GM12878 (cell line): ENCODE measurements at regions of chr5 and their contacts with region 1.

Region 1: DNA sequence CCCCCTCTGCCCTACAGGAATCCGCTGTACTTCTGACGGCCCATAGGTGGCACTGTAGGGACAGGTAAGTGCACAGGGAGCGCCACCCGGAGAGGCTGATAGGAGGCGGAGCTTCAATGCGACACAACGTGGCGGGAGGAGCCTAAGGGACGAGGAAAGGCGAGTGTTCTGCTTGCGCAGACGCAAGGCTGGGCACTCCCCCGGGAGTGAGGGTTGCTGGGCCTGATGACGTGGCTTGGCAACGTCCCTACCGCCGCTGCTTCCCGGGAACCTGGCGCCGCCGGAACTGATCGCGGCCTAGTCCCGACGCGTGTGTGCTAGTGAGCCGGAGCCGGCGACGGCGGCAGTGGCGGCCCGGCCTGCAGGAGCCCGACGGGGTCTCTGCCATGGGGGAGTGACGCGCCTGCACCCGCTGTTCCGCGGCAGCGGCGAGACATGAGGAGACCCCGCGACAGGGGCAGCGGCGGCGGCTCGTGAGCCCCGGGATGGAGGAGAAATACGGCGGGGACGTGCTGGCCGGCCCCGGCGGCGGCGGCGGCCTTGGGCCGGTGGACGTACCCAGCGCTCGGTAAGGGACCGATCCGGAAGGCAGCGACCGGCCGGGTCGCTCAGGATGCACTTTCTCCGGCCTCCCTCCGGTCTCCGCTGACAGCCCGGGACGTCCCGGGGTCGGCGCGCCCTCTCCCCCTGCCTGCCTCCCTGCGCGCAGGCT is at the start of gene SLC30A5:
- DNase-seq: peak; percentile 98
- ATAC-seq: peak; percentile 99
- H3K4me3 ChIP-seq: peak within 1 kb of the TSS; percentile 87
- H3K27ac ChIP-seq: peak within 1 kb of the TSS; percentile 57
- H3K4me1 ChIP-seq: no peaks in the 10 kb centered on the region; the same call in 1 of the 2 replicates
- H3K27me3 ChIP-seq: no peaks in the 10 kb centered on the region
- CTCF ChIP-seq: peak; percentile 88 to 98 (median 97)
- EP300 ChIP-seq: peak in 1 of 2 experiments; percentile 51; a peak in 3 of 4 replicates
- POLR2A ChIP-seq: peak; percentile 98
- RAD21 ChIP-seq: peak; percentile 98
- polyA plus RNA-seq, gene SLC30A5: 14.7 to 27.5 TPM

Region 2: DNA sequence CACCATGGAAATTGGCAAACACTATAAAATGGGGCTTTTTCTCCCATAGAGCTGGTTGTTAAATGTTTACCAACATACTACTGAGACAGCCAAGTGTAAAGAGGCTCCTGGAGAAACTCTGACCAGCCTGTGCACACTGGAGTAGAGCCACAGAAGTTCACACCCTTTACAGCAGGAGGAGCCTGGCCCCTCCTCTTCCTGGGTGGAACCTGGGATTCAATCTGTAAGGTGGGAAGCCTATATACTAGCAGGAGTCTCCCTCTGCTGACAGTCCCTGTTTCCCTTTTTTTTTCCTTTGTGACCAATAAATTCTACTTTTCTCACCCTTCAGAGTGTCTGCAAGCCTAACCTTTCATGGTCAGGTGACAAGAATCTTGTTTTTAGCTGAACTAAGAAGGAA is 10.5 kb before region 1 on chr5:
- CTCF ChIA-PET with region 1: interaction called, 18 read pairs
- POLR2A ChIA-PET with region 1: interaction called, 3 read pairs
- RAD21 ChIA-PET with region 1: interaction called, 9 read pairs
- SMC1A ChIA-PET with region 1: interaction called, 10 read pairs
- in situ Hi-C with region 1: no loop called
- intact Hi-C with region 1: no loop called
- DNase-seq: no peak
- ATAC-seq: peak; percentile 24; the same call in 1 of the 3 replicates
- H3K4me3 ChIP-seq: no peak overlapping the region
- H3K27ac ChIP-seq: no peak overlapping the region
- H3K4me1 ChIP-seq: peaks cover 8% of the 10 kb centered on the region; the same call in 1 of the 2 replicates
- H3K27me3 ChIP-seq: no peaks in the 10 kb centered on the region
- CTCF ChIP-seq: no peak
- EP300 ChIP-seq: no peak
- POLR2A ChIP-seq: no peak
- RAD21 ChIP-seq: no peak

Region 3: GRCh38 chr5:69166686-69167492 is 73.0 kb after region 1 on chr5 and contains the start of gene CCNB1:
- CTCF ChIA-PET with region 1: interaction called, 8 read pairs
- POLR2A ChIA-PET with region 1: interaction called, 3 read pairs
- RAD21 ChIA-PET with region 1: interaction called, 9 read pairs
- SMC1A ChIA-PET with region 1: interaction called, 6 read pairs
- in situ Hi-C with region 1: no loop called
- intact Hi-C with region 1: loop called (anchors 5 kb)
- DNase-seq: peak; percentile 95
- ATAC-seq: peak; percentile 99
- H3K4me3 ChIP-seq: peak within 1 kb of the TSS; percentile 86
- H3K27ac ChIP-seq: peak within 1 kb of the TSS; percentile 65
- H3K4me1 ChIP-seq: no peaks in the 10 kb centered on the region
- H3K27me3 ChIP-seq: no peaks in the 10 kb centered on the region
- CTCF ChIP-seq: 0 out of 6 replicates have a peak, but pooled peaks of 1 of the 3 experiments have one; percentile 3
- EP300 ChIP-seq: no peak
- POLR2A ChIP-seq: peak; percentile 90
- RAD21 ChIP-seq: no peak
- polyA plus RNA-seq, gene CCNB1: 312 to 375 TPM

Region 4: GRCh38 chr5:69234457-69235268 is 140.7 kb after region 1 on chr5 and contains the start of gene CDK7:
- CTCF ChIA-PET with region 1: interaction called, 9 read pairs
- POLR2A ChIA-PET with region 1: no interaction called
- RAD21 ChIA-PET with region 1: interaction called, 9 read pairs
- SMC1A ChIA-PET with region 1: interaction called, 5 read pairs
- in situ Hi-C with region 1: no loop called
- intact Hi-C with region 1: loop called (anchors 5 kb)
- DNase-seq: peak; percentile 77
- ATAC-seq: peak; percentile 99
- H3K4me3 ChIP-seq: peak within 1 kb of the TSS; percentile 78
- H3K27ac ChIP-seq: peak within 1 kb of the TSS; percentile 84
- H3K4me1 ChIP-seq: no peaks in the 10 kb centered on the region; the same call in 1 of the 2 replicates
- H3K27me3 ChIP-seq: no peaks in the 10 kb centered on the region
- CTCF ChIP-seq: no peak
- EP300 ChIP-seq: no peak
- POLR2A ChIP-seq: peak; percentile 88
- RAD21 ChIP-seq: no peak
- polyA plus RNA-seq, gene CDK7: 80.3 to 93.9 TPM

Region 5: DNA sequence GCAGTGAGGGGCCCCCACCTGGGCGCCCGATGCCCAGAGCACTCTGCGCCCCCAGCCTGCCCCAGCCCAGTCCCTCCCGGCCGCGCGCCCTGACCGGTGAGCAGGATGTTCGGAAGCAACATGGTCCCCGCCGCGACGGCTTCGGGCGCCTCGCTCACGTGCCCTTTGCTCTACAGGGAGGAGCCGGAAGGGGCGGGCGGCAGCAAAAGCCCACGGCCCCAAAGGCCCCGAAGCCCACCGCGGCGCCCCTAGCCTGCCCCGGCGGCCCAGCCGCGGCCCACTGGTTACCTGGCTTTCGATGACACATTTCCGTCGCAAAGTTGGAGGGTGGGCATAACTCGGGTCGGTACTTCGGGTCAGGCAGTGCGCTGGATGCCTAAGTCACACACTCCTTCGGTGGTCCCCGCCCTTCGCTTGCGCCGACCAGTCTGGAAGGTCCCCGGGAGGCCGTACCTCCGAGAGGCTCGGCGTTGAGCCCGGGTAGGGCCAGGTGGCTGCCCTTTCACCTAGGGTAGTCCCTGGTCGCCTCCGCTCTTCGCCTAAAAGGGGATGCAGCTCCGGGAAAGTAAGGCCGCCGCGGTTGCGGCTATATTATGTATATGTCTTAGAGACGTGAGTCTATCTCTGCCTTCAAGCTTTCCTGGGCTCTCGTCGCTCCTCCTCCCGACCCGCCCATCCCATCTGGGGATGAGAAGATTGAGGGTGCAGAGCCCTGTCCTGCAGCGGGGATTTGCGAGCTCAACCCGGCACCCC is 275.6 kb after region 1 on chr5 and contains the starts of genes AK6, RAD17 and TAF9:
- CTCF ChIA-PET with region 1: interaction called, 11 read pairs
- POLR2A ChIA-PET with region 1: interaction called, 7 read pairs
- RAD21 ChIA-PET with region 1: interaction called, 21 read pairs
- SMC1A ChIA-PET with region 1: interaction called, 6 read pairs
- in situ Hi-C with region 1: no loop called
- intact Hi-C with region 1: loop called (anchors 1 kb)
- DNase-seq: peak; percentile 76
- ATAC-seq: peak; percentile 91
- H3K4me3 ChIP-seq: peak within 1 kb of the TSS; percentile 93
- H3K27ac ChIP-seq: peak within 1 kb of the TSS; percentile 99
- H3K4me1 ChIP-seq: peaks cover 2% of the 10 kb centered on the region
- H3K27me3 ChIP-seq: no peaks in the 10 kb centered on the region
- CTCF ChIP-seq: no peak
- EP300 ChIP-seq: peak in 1 of 2 experiments; percentile 49; a peak in 1 of 4 replicates
- POLR2A ChIP-seq: peak; percentile 90
- RAD21 ChIP-seq: no peak
- polyA plus RNA-seq, gene AK6: 396 to 446 TPM
- polyA plus RNA-seq, gene RAD17: 23.9 to 30.8 TPM
- polyA plus RNA-seq, gene TAF9: 191 to 318 TPM

Region 6: DNA sequence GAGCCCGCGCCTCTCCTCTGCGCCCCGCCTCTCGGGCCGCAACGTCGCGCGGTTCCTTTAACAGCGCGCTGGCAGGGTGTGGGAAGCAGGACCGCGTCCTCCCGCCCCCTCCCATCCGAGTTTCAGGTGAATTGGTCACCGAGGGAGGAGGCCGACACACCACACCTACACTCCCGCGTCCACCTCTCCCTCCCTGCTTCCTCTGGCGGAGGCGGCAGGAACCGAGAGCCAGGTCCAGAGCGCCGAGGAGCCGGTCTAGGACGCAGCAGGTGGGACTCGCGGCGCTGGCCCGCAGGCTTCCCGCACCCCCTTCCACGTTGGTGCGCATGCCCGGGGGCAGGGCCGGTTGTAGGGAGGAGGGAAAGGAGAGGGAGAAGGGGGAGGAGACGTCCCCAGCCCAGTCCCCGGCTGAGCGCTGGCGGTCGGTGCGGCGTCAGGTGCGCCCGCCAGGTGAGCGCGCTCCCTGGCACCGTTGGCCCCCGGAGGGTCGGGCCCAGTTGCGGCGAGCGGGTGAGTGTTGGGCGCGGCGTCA is 398.5 kb after region 1 on chr5 and contains the start of gene OCLN:
- CTCF ChIA-PET with region 1: interaction called, 3 read pairs
- POLR2A ChIA-PET with region 1: interaction called, 3 read pairs
- RAD21 ChIA-PET with region 1: no interaction called
- SMC1A ChIA-PET with region 1: no interaction called
- in situ Hi-C with region 1: no loop called
- intact Hi-C with region 1: loop called (anchors 10 kb)
- DNase-seq: no peak
- ATAC-seq: peak; percentile 80
- H3K4me3 ChIP-seq: peak within 1 kb of the TSS; percentile 97
- H3K27ac ChIP-seq: peak within 1 kb of the TSS; percentile 57
- H3K4me1 ChIP-seq: peaks cover 7% of the 10 kb centered on the region; the same call in 1 of the 2 replicates
- H3K27me3 ChIP-seq: no peaks in the 10 kb centered on the region; a peak in 1 of 4 replicates
- CTCF ChIP-seq: no peak
- EP300 ChIP-seq: no peak
- POLR2A ChIP-seq: peak; percentile 81
- RAD21 ChIP-seq: 0 out of 2 replicates have a peak, but pooled peaks have one; percentile 0
- polyA plus RNA-seq, gene OCLN: 4.7 to 8.9 TPM